HepG2 (cell line): ENCODE measurements at regions of chr9 and their contacts with region 1.

Region 1: DNA sequence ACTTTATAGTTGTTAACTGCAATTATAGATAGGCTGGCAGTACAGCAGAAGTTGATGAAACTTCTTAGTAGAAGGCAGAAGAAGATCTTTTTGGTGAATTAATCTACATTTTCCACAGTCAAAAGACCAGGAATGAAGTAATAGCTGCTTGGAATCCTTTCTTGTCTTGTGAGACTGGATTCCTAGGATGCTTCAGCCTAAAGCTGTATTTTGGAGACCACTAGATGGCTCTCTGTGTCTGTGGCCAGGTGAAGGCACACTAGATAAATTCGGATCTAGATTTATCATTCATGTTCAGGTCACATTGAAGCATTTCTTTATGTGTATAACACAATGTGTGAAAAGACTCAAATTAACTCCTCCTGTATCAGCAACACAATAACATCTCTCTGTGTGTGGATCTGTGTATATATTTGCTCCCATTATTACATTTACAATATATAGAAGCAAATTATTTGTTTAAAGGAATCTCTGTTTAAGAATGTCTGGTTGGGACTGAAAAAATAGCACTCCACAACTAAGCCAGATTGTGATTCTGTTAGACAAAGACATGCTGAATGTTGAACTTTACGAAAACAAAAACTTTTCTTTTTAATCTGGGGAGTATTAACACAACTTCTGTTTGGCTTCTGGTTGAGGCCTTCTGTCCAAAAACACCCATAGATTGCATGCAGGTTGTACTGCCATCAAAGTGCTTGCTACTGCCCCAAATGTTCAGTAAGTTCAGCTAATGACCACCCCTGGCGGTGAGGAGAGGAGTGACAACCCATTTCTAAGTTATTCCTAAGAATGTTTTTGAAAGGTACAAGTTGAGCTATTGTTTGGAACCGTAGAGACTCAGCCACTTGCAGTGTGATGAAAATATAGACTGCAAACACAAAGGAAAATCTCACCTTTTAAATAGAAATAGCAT is 10.6 kb downstream of the GRIN3A start:
- DNase-seq: peak; percentile 24
- ATAC-seq: peak; percentile 84
- H3K4me3 ChIP-seq: no peak overlapping the region
- H3K27ac ChIP-seq: no peak overlapping the region
- H3K4me1 ChIP-seq: no peaks in the 10 kb centered on the region
- H3K27me3 ChIP-seq: no peaks in the 10 kb centered on the region
- CTCF ChIP-seq: peak; percentile 59
- EP300 ChIP-seq: no peak
- POLR2A ChIP-seq: no peak
- RAD21 ChIP-seq: no peak

Region 2: GRCh38 chr9:101601904-101602765 is 125.7 kb before region 1 on chr9:
- CTCF ChIA-PET with region 1: interaction called, 11 read pairs
- POLR2A ChIA-PET with region 1: no interaction called
- in situ Hi-C with region 1: no loop called
- intact Hi-C with region 1: loop called (anchors 1 kb)
- DNase-seq: peak; percentile 46
- ATAC-seq: peak; percentile 84
- H3K4me3 ChIP-seq: no peak overlapping the region
- H3K27ac ChIP-seq: no peak overlapping the region
- H3K4me1 ChIP-seq: peaks cover 16% of the 10 kb centered on the region
- H3K27me3 ChIP-seq: no peaks in the 10 kb centered on the region
- CTCF ChIP-seq: peak; percentile 72
- EP300 ChIP-seq: no peak
- POLR2A ChIP-seq: no peak
- RAD21 ChIP-seq: peak; percentile 18; the same call in 1 of the 2 replicates

Region 3: DNA sequence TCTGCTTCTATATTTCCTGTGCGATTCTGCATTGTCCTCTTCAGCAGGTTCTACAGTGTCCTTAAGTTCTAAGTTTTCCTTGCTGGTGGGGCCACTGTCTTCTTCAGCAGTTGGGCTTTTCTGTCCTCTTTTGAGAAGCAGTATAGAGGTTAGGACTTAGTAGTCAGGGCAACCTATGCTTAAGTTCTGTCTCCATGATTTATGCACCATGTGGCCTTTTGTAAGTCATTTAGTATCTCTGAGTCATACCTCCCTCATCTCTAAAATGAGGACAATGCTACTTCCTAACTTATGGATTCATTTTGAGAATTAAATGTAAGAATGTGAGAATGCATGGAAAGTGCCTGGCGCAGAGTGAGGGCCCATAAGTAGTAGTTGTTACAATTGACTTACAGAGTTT is 36.2 kb before region 1 on chr9:
- CTCF ChIA-PET with region 1: no interaction called
- POLR2A ChIA-PET with region 1: no interaction called
- in situ Hi-C with region 1: no loop called
- intact Hi-C with region 1: no loop called
- DNase-seq: no peak
- ATAC-seq: no peak
- H3K4me3 ChIP-seq: no peak overlapping the region
- H3K27ac ChIP-seq: no peak overlapping the region
- H3K4me1 ChIP-seq: no peaks in the 10 kb centered on the region
- H3K27me3 ChIP-seq: no peaks in the 10 kb centered on the region
- CTCF ChIP-seq: no peak
- EP300 ChIP-seq: no peak
- POLR2A ChIP-seq: no peak
- RAD21 ChIP-seq: no peak

Region 4: DNA sequence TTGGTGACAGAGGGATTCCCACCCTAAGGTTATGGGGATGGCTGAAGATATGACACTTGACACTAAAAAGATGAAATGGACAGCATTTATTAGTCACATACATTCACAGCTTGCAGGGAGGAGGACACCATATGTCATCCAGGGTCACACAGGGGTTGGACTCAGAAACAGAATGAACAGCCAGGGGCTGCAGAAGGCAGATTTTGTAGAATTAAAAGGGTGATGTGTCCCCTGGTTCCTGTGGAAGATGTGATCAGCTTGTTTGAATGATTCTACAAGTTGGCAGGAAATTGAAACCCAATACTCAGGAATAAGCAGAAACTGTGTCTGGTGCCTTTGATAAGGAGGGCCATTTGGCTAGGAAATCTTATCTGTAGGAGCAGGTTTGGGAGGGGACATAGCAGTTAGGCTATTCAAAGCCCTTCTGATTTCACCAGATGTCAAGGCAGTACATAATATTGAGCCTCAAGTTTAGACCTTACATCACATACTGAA is 112.9 kb after region 1 on chr9:
- CTCF ChIA-PET with region 1: no interaction called
- POLR2A ChIA-PET with region 1: no interaction called
- in situ Hi-C with region 1: no loop called
- intact Hi-C with region 1: no loop called
- DNase-seq: no peak
- ATAC-seq: no peak
- H3K4me3 ChIP-seq: no peak overlapping the region
- H3K27ac ChIP-seq: no peak overlapping the region
- H3K4me1 ChIP-seq: no peaks in the 10 kb centered on the region
- H3K27me3 ChIP-seq: no peaks in the 10 kb centered on the region
- CTCF ChIP-seq: no peak
- EP300 ChIP-seq: no peak
- POLR2A ChIP-seq: no peak
- RAD21 ChIP-seq: no peak